ENCODE measurements at regions of chr1 and their contacts with region 1.

Region 1: DNA sequence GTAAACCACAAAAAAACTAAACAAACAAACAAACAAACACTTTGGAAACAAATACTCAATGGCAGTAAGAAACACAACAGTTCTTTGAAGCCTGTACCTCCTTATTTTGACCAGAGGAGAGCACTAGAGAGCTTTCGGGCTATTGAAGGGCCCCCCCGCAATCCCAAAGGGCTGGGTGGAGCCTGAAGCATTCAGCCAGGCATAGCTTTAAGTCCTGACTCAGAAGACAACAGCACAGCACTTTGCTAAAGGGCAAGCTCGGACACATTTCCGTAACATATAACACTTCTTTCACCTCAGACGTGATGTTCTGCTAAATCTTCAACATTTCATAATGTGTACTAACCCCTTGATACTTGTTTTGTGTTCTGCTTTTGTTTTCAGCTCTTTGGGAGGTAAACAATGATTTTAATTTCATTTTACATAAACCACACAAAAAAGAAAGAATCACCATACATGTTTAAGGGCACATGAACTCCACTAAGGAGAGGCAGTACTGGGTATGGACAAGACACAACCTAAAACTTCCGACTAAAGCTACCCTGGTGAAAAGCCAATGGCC is 9.7 kb upstream of the SHCBP1L start:
- DNase-seq: peak; percentile 76
- H3K4me3 ChIP-seq: peak overlapping the region; percentile 38; the same call in 1 of the 2 replicates
- H3K27ac ChIP-seq: no peak overlapping the region
- H3K27me3 ChIP-seq: no peaks in the 10 kb centered on the region
- CTCF ChIP-seq: peak; percentile 95

Region 2: GRCh38 chr1:182633672-182634176 is 328.9 kb before region 1 on chr1:
- CTCF ChIA-PET with region 1: no interaction called
- POLR2A ChIA-PET with region 1: no interaction called
- DNase-seq: no peak
- H3K4me3 ChIP-seq: no peak overlapping the region
- H3K27ac ChIP-seq: no peak overlapping the region
- H3K27me3 ChIP-seq: peaks cover 4% of the 10 kb centered on the region
- CTCF ChIP-seq: no peak

Region 3: DNA sequence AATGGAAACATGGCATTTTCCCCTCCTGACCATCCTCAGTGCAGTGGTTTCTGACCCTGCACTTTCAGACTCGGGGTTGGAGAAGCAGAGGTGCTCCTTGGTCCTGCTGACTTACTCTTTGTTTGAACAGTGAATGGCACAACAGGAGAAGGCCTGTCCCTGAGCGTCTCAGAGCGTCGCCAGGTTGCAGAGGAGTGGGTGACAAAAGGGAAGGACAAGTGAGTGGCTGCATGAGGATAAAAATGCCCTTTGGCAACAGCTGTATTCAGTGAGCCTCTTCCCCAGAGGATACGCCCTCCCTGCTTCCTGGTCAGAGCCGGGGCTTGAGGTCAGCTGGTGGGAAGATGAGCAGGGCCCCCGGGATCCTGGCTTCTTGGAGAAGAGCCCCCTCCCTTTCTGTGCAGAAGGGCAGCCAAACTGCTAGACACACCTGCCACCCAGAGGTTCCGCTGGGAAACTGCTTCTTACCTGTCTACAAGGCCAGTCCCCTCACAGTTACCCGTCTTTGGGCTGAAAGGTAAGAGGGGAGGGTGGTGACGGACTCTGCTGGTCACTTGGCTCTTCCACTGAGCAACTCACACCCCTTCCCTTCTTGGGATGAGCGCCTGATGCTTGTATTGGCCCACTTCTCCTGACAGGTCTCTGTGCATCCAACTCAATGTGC is 156.5 kb before region 1 on chr1:
- CTCF ChIA-PET with region 1: no interaction called
- POLR2A ChIA-PET with region 1: no interaction called
- DNase-seq: no peak
- H3K4me3 ChIP-seq: no peak overlapping the region
- H3K27ac ChIP-seq: no peak overlapping the region
- H3K27me3 ChIP-seq: peaks cover 2% of the 10 kb centered on the region
- CTCF ChIP-seq: no peak

Region 4: GRCh38 chr1:182897696-182898095 is 64.9 kb before region 1 on chr1:
- CTCF ChIA-PET with region 1: no interaction called
- POLR2A ChIA-PET with region 1: no interaction called
- DNase-seq: no peak
- H3K4me3 ChIP-seq: no peak overlapping the region
- H3K27ac ChIP-seq: no peak overlapping the region
- H3K27me3 ChIP-seq: no peaks in the 10 kb centered on the region
- CTCF ChIP-seq: no peak

Region 5: GRCh38 chr1:182974506-182975191 is 12.0 kb after region 1 on chr1:
- CTCF ChIA-PET with region 1: interaction called, 25 read pairs
- POLR2A ChIA-PET with region 1: interaction called, 3 read pairs
- DNase-seq: no peak
- H3K4me3 ChIP-seq: no peak overlapping the region
- H3K27ac ChIP-seq: no peak overlapping the region
- H3K27me3 ChIP-seq: no peaks in the 10 kb centered on the region
- CTCF ChIP-seq: no peak

Region 6: GRCh38 chr1:183024317-183025009 is 61.8 kb after region 1 on chr1:
- CTCF ChIA-PET with region 1: interaction called, 12 read pairs
- POLR2A ChIA-PET with region 1: interaction called, 9 read pairs
- DNase-seq: no peak
- H3K4me3 ChIP-seq: peak overlapping the region; percentile 88
- H3K27ac ChIP-seq: peak overlapping the region; percentile 77
- H3K27me3 ChIP-seq: no peaks in the 10 kb centered on the region
- CTCF ChIP-seq: no peak

Region 7: DNA sequence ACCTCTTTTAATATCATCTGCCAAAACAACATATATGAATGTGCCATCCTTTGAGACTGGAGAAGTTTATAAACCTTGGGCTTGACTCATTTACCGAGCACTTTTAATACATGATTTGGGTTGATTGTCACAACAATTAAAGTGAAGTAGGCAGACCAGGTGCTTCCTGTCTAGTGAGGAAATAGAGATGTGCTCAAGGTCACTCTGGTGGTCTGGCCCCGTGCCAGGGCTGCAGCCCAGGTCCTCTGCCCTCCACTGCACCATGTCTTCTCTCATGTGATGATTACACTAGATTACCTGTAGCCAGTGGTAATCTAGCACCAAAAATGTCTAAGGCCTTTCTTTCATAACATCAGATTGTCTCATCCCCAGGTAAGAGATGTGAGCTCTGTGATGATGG is 161.6 kb after region 1 on chr1:
- CTCF ChIA-PET with region 1: interaction called, 14 read pairs
- POLR2A ChIA-PET with region 1: no interaction called
- DNase-seq: no peak
- H3K4me3 ChIP-seq: no peak overlapping the region
- H3K27ac ChIP-seq: no peak overlapping the region
- H3K27me3 ChIP-seq: no peaks in the 10 kb centered on the region
- CTCF ChIP-seq: no peak

Region 8: GRCh38 chr1:183262628-183263194 is 300.1 kb after region 1 on chr1:
- CTCF ChIA-PET with region 1: interaction called, 12 read pairs
- POLR2A ChIA-PET with region 1: no interaction called
- DNase-seq: no peak
- H3K4me3 ChIP-seq: no peak overlapping the region
- H3K27ac ChIP-seq: no peak overlapping the region
- H3K27me3 ChIP-seq: no peaks in the 10 kb centered on the region
- CTCF ChIP-seq: no peak

Region 9: GRCh38 chr1:183281553-183282091 is 319.0 kb after region 1 on chr1:
- CTCF ChIA-PET with region 1: interaction called, 27 read pairs
- POLR2A ChIA-PET with region 1: interaction called, 4 read pairs
- DNase-seq: peak; percentile 90
- H3K4me3 ChIP-seq: no peak overlapping the region
- H3K27ac ChIP-seq: peak overlapping the region; percentile 2
- H3K27me3 ChIP-seq: no peaks in the 10 kb centered on the region
- CTCF ChIP-seq: peak; percentile 91

Region 10: DNA sequence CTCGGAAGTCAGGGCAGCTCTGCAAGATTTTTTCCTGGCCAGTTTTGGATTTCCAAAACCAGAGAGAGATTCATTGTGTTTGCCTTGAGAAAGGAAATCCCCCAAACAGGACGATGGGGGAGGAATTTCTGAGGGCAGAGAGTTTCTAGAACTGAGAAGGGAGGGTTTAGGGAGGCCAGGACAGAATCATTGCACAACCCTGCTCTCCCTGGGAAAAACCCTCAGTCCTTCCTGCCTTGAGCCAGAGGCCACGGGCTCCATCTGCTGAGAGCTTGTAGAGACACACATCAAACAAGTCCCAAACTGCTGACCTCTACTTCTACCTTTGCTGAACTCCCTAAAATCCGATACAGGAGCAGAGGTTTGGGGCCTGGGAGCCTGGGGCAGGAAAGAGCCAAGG is 355.8 kb after region 1 on chr1:
- CTCF ChIA-PET with region 1: interaction called, 12 read pairs
- POLR2A ChIA-PET with region 1: no interaction called
- DNase-seq: peak; percentile 83
- H3K4me3 ChIP-seq: no peak overlapping the region
- H3K27ac ChIP-seq: peak overlapping the region; percentile 52
- H3K27me3 ChIP-seq: peaks cover 2% of the 10 kb centered on the region
- CTCF ChIP-seq: peak; percentile 83

Region 11: GRCh38 chr1:183444243-183444642 is 481.6 kb after region 1 on chr1:
- CTCF ChIA-PET with region 1: no interaction called
- POLR2A ChIA-PET with region 1: no interaction called
- DNase-seq: no peak
- H3K4me3 ChIP-seq: no peak overlapping the region
- H3K27ac ChIP-seq: no peak overlapping the region
- H3K27me3 ChIP-seq: peaks cover 8% of the 10 kb centered on the region
- CTCF ChIP-seq: no peak